ENCODE measurements at regions of chr9 and their contacts with region 1.

Region 1: GRCh38 chr9:69083321-69083720 is 47.8 kb downstream of the FXN start:
- DNase-seq: no peak
- ATAC-seq: no peak
- H3K4me3 Mint-ChIP-seq: no peak overlapping the region
- H3K27ac Mint-ChIP-seq: no peak overlapping the region
- H3K4me1 Mint-ChIP-seq: no peaks in the 10 kb centered on the region
- H3K27me3 Mint-ChIP-seq: no peaks in the 10 kb centered on the region
- CTCF ChIP-seq: no peak

Region 2: DNA sequence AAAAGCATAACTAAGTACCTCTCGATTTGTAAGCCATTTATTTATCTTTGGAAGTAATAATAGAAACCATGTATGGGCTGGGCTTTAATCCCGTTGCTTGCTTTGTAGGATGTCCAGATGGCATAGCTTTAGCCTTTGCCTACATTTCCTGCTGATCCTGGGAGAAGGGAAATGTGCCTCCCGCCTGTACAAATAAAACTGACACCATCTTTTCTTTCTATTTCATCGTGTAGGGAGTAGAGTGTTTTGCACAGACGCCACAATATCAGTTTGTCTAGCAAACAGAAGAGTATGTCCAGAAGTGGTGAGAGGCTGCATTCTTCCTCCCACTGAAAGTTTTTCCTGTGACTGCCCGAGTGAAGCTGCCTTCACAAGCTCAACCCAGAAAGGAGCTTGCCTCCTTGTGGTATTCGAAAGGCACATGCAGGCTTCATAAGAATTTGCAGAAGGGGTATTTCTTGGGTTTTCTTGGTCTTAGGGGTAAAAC is 66.0 kb after region 1 on chr9:
- CTCF ChIA-PET with region 1: no interaction called
- POLR2A ChIA-PET with region 1: no interaction called
- intact Hi-C with region 1: loop called (anchors 2 kb)
- DNase-seq: no peak
- ATAC-seq: no peak
- H3K4me3 Mint-ChIP-seq: no peak overlapping the region
- H3K27ac Mint-ChIP-seq: no peak overlapping the region
- H3K4me1 Mint-ChIP-seq: peaks cover 4% of the 10 kb centered on the region
- H3K27me3 Mint-ChIP-seq: no peaks in the 10 kb centered on the region
- CTCF ChIP-seq: no peak

Measured in activated B cell treated with CpG ODN at 0.5 μM for 24 hours (primary cell).